ENCODE measurements at regions of chr1 and their contacts with region 1.

Region 1: GRCh38 chr1:66253330-66253921 is 280.5 kb upstream of the SGIP1 start:
- DNase-seq: no peak
- H3K4me3 ChIP-seq: no peak overlapping the region
- H3K27ac ChIP-seq: no peak overlapping the region
- H3K4me1 ChIP-seq: no peaks in the 10 kb centered on the region; a peak in 1 of 7 replicates
- H3K27me3 ChIP-seq: no peaks in the 10 kb centered on the region
- CTCF ChIP-seq: peak in 2 of 3 experiments; percentile 69; a peak in 3 of 4 replicates
- EP300 ChIP-seq: no peak
- POLR2A ChIP-seq: no peak
- RAD21 ChIP-seq: peak; percentile 96 to 98

Region 2: DNA sequence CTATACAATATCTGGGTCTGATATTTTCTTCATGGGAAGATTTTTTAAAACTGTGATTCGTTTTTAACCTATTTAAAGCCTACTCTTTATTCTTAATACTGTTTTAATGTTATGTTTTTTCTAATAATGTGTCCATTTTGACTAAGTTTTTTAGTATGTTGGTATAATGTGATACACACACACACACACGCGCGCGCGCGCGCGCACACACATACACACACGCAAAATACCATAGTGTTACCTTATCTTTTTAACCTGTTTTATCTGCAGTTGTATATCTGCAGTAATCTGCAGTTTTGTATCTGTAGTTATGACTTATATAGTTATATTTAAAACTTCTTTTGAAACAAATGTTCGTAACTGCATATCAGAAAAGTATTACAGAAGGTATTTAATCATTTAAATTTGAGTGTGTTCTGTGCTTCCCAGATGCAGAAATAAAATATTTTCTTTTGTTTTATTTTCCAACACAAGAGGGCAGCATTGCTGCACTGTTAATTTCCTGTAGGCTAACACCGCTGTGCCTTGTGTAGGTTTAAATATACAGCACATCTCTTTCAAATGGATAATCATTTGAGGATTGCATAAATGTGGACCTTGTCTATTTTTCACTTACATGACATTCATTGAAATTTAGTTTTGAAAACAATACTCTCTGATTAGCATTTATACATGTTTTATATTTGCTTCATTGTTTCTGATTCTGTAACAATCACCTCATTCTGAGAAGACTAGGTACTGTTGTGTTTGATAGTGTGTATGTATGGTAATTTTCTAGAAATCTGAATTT is 294.7 kb before region 1 on chr1:
- CTCF ChIA-PET with region 1: interaction called, 204 read pairs
- POLR2A ChIA-PET with region 1: no interaction called
- DNase-seq: no peak
- H3K4me3 ChIP-seq: no peak overlapping the region
- H3K27ac ChIP-seq: no peak overlapping the region
- H3K4me1 ChIP-seq: no peaks in the 10 kb centered on the region
- H3K27me3 ChIP-seq: no peaks in the 10 kb centered on the region
- CTCF ChIP-seq: peak in 2 of 3 experiments; percentile 47 to 69; a peak in 3 of 4 replicates
- EP300 ChIP-seq: no peak
- POLR2A ChIP-seq: no peak
- RAD21 ChIP-seq: peak; percentile 90 to 92

Region 3: GRCh38 chr1:66276218-66276617 is 22.8 kb after region 1 on chr1:
- CTCF ChIA-PET with region 1: interaction called, 11 read pairs
- POLR2A ChIA-PET with region 1: no interaction called
- DNase-seq: no peak
- H3K4me3 ChIP-seq: no peak overlapping the region
- H3K27ac ChIP-seq: no peak overlapping the region
- H3K4me1 ChIP-seq: peaks cover 3 to 14% (median 8%) of the 10 kb centered on the region in 4 experiments; a peak in 5 of 7 replicates
- H3K27me3 ChIP-seq: no peaks in the 10 kb centered on the region
- CTCF ChIP-seq: no peak
- EP300 ChIP-seq: no peak
- POLR2A ChIP-seq: no peak
- RAD21 ChIP-seq: no peak

Region 4: DNA sequence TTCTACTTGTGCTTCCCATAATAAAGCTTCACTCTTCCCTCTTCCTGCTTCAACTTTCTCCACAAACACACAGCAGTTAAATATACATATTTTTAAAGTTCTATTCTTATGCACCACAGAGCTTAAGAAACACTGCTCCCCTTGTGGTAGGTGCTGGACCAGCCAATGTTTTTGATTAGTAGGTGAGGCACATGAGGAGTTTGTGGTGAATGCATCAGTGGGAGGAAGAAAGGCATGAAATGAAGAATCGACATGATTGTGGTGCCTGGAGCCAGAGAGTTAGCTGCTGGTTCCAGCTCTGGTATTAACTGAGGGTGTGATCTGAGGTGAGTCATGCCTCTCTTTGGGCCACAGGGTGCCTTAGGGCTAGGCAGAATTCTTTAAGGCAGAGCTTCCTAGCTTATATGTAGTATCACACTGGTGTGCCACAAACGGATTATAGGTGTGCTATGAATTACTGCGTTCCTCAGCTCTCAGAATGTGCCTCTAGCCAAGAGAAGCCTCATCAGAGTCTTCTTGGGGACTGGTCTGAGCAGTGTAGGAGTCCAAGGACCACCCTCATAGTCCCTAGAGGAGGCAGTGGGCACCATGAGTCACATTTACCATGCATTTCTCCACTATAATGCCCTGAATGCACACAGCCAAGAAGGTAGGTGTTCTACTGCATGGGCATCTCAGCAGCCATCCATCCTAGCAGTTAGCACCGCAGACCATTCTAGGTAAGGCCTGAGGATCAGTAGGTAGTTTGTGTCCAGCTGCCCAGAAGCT is 183.1 kb after region 1 on chr1:
- CTCF ChIA-PET with region 1: interaction called, 27 read pairs
- POLR2A ChIA-PET with region 1: no interaction called
- DNase-seq: no peak
- H3K4me3 ChIP-seq: no peak overlapping the region
- H3K27ac ChIP-seq: no peak overlapping the region; the same call in 1 of the 2 replicates
- H3K4me1 ChIP-seq: peaks cover 0 to 2% (median 0%) of the 10 kb centered on the region in 4 experiments; a peak in 1 of 7 replicates
- H3K27me3 ChIP-seq: no peaks in the 10 kb centered on the region
- CTCF ChIP-seq: peak in 2 of 3 experiments; percentile 2 to 44; a peak in 1 of 4 replicates
- EP300 ChIP-seq: no peak
- POLR2A ChIP-seq: no peak
- RAD21 ChIP-seq: 0 out of 4 replicates have a peak, but pooled peaks of 1 of the 2 experiments have one; percentile 16

Region 5: DNA sequence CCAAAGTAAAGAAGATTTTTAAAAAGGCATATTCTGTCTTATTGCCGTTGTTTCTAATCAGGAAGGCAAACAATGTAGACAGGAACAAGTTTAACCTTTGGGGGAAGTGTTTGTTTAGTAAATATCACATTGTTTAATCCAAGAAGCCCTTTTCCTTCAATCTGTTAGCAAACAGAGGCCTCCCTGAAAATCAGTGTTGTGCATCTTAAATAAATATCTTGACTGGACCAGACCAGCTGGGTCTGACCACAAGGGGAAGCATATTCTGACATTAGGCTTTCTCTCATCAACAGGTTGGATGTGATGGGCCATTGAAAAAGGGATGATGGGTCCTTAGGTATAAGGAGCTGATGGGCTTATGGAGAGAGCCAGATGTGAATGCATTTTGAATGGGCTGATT is 198.7 kb after region 1 on chr1:
- CTCF ChIA-PET with region 1: interaction called, 273 read pairs
- POLR2A ChIA-PET with region 1: no interaction called
- DNase-seq: no peak
- H3K4me3 ChIP-seq: no peak overlapping the region
- H3K27ac ChIP-seq: no peak overlapping the region
- H3K4me1 ChIP-seq: no peaks in the 10 kb centered on the region
- H3K27me3 ChIP-seq: no peaks in the 10 kb centered on the region
- CTCF ChIP-seq: no peak
- EP300 ChIP-seq: no peak
- POLR2A ChIP-seq: no peak
- RAD21 ChIP-seq: peak; percentile 2 to 15; a peak in 2 of 4 replicates

Region 6: DNA sequence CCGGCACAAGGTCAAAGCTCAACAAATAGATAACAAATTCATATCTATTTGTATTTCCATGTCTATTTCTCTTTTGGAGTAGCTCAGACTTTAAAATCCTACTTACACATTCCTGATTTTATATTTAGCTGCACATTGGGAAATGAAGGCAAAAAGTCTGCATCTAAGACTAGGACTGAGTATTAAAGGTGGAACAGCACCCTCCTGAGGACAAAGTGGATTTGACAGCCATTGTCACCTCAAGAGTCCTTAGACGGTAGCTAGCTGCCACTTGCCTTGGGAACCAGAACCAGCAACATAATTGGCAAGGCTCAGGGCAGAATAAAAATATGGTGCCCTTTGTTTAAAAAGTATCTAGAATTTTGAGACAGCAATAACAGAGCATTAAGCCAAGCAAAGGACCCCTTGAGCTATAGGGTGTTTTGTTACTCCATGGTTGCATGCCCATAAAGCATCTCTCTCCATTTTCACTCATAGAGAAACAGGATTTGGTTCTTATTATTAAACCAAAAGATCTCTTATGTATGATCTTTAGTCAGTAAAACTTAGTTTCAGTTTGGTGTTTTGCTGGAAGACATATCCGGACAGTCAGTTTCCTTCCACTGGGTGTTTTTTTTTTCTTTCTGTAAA is 250.5 kb after region 1 on chr1:
- CTCF ChIA-PET with region 1: interaction called, 17 read pairs
- POLR2A ChIA-PET with region 1: no interaction called
- DNase-seq: peak; percentile 7 to 68
- H3K4me3 ChIP-seq: no peak overlapping the region
- H3K27ac ChIP-seq: no peak overlapping the region
- H3K4me1 ChIP-seq: no peaks in the 10 kb centered on the region
- H3K27me3 ChIP-seq: no peaks in the 10 kb centered on the region
- CTCF ChIP-seq: peak; percentile 50 to 86 (median 71)
- EP300 ChIP-seq: no peak
- POLR2A ChIP-seq: no peak
- RAD21 ChIP-seq: peak; percentile 81 to 90

Measured in H1 (cell line).